ENCODE measurements at regions of chr7 and their contacts with region 1.

Region 1: GRCh38 chr7:19317461-19317860 is 172.2 kb upstream of the FERD3L start:
- DNase-seq: no peak
- H3K4me3 ChIP-seq: no peak overlapping the region
- H3K27ac ChIP-seq: no peak overlapping the region
- H3K4me1 ChIP-seq: no peaks in the 10 kb centered on the region
- H3K27me3 ChIP-seq: no peaks in the 10 kb centered on the region
- CTCF ChIP-seq: no peak

Region 2: GRCh38 chr7:17907013-17907412 is 1410.4 kb before region 1 on chr7:
- CTCF ChIA-PET with region 1: no interaction called
- POLR2A ChIA-PET with region 1: no interaction called
- intact Hi-C with region 1: no loop called
- DNase-seq: peak in 1 of 2 experiments; percentile 28
- H3K4me3 ChIP-seq: no peak overlapping the region
- H3K27ac ChIP-seq: no peak overlapping the region
- H3K4me1 ChIP-seq: peaks cover 12% of the 10 kb centered on the region
- H3K27me3 ChIP-seq: no peaks in the 10 kb centered on the region
- CTCF ChIP-seq: no peak

Region 3: DNA sequence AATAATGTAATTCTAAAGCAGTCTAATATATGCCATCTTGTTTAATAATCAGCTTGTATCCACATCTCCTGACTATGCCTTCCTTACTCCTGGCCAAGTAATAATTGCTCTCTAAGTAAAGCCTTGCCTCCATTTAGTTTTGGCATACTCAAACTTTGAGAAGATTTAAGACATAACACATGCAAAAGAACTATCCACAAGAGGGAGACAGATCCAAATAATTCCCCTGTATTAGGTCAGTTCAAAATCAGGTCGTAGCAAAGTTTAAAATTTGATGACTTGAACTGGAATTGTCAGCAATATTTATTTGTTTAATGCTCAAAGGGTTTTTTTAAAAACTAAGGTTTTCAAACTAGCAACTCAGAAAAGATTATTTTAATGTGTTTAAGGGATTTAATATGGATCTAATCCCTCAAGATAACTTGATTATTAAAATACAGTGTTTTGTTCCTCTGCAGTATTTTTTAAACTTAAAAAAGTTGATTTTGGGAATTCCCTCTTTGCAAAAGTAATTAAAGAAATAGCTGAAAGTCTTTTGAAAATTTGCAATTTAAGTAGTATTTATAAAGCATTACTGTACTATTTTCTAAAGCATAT is 726.6 kb before region 1 on chr7:
- CTCF ChIA-PET with region 1: no interaction called
- POLR2A ChIA-PET with region 1: no interaction called
- intact Hi-C with region 1: no loop called
- DNase-seq: peak in 1 of 2 experiments; percentile 53
- H3K4me3 ChIP-seq: no peak overlapping the region
- H3K27ac ChIP-seq: no peak overlapping the region
- H3K4me1 ChIP-seq: peaks cover 7% of the 10 kb centered on the region
- H3K27me3 ChIP-seq: no peaks in the 10 kb centered on the region
- CTCF ChIP-seq: peak; percentile 86

Region 4: GRCh38 chr7:19362099-19362498 is 44.6 kb after region 1 on chr7:
- CTCF ChIA-PET with region 1: interaction called, 14 read pairs
- POLR2A ChIA-PET with region 1: no interaction called
- intact Hi-C with region 1: no loop called
- DNase-seq: no peak
- H3K4me3 ChIP-seq: no peak overlapping the region
- H3K27ac ChIP-seq: no peak overlapping the region
- H3K4me1 ChIP-seq: no peaks in the 10 kb centered on the region
- H3K27me3 ChIP-seq: no peaks in the 10 kb centered on the region
- CTCF ChIP-seq: no peak

Measured in PC-9 (cell line).